ENCODE measurements at regions of chr4 and their contacts with region 1.

Region 1: DNA sequence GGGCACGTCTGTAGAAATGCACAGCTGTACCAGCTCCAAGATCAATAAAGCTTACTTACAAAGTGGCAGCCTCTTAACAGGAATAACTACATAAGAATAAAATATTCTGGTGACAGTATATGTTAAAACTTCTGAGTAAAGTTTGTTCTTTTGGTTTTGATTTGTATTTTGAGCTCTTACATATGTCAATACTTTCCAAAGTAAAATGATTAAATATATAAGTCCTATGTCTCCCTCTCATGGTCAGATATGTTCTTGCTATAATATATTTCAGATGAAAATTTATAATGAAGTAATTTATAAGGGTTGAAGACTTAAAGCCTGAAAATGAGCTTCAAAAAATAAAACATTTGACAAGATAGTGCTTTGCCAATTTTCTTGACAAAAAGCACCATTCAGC is 254.4 kb downstream of the NPFFR2 start:
- DNase-seq: peak; percentile 10
- H3K4me3 ChIP-seq: no peak overlapping the region
- H3K27ac ChIP-seq: no peak overlapping the region
- H3K4me1 ChIP-seq: no peaks in the 10 kb centered on the region
- H3K27me3 ChIP-seq: no peaks in the 10 kb centered on the region
- CTCF ChIP-seq: no peak
- POLR2A ChIP-seq: no peak

Region 2: DNA sequence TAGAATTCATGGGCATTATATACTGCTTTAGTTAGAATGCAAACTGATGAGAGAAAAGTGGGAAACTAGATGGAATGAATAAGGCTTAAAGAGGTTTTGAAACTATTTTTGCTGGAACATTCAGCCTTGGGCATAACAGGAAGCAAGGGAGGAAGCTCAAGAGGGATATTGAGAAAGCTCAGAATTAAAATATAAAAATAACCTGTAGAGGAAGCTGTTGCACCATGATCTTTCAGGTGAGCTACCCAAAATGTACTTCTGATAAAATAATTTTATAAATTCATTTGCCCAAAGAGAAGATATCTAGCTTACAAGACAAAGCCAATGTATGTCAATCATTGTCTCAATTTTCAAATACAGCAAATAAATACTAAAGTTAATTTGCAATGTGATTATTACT is 513.6 kb before region 1 on chr4:
- CTCF ChIA-PET with region 1: interaction called, 5 read pairs
- POLR2A ChIA-PET with region 1: no interaction called
- dilution Hi-C with region 1: no loop called
- intact Hi-C with region 1: loop called (anchors 5 kb)
- DNase-seq: no peak
- H3K4me3 ChIP-seq: no peak overlapping the region
- H3K27ac ChIP-seq: no peak overlapping the region
- H3K4me1 ChIP-seq: no peaks in the 10 kb centered on the region
- H3K27me3 ChIP-seq: no peaks in the 10 kb centered on the region
- CTCF ChIP-seq: no peak
- POLR2A ChIP-seq: no peak

Measured in endothelial cell of umbilical vein (primary cell).